ENCODE measurements at regions of chr6 and their contacts with region 1.

Region 1: DNA sequence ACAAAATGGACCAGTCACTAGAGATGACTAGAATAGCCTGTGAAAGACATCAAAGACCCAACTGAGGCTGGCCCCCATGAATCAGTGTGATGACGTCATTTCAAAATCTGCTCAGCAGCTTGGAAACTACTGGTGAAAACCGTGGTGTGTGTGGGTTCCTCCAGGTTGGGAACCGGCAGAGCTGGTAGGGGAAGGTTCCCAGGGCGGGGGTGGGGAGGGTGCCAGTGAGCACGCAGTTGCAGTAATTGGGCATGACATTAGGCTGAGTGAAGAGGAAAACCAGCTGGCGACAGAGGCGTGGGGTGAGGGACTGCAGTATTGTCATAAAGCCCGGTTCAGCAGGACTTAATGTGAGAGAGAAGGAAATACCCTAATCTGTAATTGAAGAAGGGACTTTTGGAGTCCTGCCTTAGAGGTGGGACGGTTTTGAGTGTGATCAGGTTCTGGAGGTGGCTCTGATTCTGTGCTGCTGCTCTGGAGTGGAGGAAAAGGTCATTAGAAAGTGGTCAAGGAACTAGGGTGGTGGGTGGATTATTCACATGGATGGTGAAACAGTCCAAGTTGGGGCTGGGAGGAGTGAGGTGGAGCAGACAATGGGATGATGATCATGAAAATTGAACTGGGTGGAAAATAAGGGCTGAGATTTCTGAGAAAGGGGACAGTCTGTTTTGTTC is 52.0 kb upstream of the MTHFD1L start:
- DNase-seq: no peak
- H3K4me3 ChIP-seq: no peak overlapping the region
- CTCF ChIP-seq: no peak

Region 2: GRCh38 chr6:150409576-150410066 is 403.8 kb before region 1 on chr6:
- CTCF ChIA-PET with region 1: interaction called, 15 read pairs
- POLR2A ChIA-PET with region 1: no interaction called
- DNase-seq: no peak
- H3K4me3 ChIP-seq: no peak overlapping the region
- CTCF ChIP-seq: no peak

Region 3: DNA sequence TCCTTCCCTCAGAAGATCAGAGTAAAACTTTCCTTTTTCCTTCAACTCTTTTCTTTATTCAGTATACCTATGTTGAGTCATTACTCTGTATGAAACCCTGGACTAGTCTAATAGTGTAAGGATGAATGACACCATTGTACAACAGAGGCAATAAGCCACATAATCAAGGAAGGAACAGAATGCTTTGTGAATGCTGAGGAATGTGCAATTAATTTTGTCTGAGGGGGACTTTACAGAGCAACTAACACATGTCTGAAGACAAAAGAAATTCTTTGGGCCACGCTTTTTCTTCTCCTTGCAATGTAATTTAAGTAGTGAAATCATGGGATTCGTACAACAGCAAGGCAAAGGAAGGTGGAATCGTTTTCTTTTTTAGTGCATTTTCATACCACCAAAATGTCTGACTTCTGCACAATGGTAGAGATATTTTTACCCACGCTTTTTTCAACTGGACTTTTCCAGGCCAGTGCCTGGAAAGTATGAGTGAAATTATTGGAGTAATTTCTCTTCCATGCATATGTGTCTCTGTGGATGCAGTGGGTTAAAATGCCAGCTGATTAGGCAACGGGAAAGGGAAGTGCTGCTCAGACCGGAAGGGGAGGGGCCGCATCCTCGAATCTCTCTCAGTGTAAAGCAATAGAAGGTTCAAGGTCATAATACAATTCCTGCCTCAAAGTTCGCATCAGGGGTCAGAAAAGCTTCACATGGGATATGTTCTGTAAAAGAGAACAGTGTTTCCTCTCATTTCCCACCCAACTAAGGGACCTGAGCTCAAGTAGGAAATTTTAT is 37.8 kb before region 1 on chr6:
- CTCF ChIA-PET with region 1: no interaction called
- POLR2A ChIA-PET with region 1: no interaction called
- DNase-seq: no peak
- H3K4me3 ChIP-seq: no peak overlapping the region
- CTCF ChIP-seq: no peak

Region 4: DNA sequence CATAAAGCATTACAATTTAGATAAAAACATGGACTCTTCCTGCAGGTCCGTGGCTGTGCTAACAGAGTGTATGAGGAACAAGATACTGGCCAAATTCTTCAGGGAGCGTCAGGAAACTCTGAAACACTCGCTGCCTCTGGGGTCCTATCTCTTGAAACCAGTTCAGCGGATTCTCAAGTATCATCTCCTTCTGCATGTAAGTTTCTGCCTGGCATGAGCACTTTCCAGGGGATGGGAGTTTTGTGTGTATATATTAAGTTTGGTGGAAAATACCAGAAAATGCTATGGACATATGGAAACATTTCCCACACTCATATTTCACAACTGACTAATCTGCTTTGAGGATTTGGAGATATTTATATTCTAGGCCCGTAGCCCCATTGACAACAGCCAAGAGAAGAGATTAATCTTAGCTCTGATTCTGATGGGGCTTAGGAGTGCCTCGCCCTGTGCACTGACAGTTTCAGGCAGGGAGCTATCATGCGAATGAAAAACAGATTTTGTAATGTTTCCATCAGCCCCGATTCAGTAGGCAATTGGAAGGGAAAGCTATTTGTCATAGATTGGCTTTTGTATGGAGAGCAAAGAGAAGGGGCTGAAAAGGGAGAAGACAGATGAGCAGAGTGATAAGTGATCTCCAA is 12.7 kb before region 1 on chr6:
- CTCF ChIA-PET with region 1: interaction called, 34 read pairs
- POLR2A ChIA-PET with region 1: no interaction called
- DNase-seq: no peak
- H3K4me3 ChIP-seq: no peak overlapping the region
- CTCF ChIP-seq: no peak

Region 5: DNA sequence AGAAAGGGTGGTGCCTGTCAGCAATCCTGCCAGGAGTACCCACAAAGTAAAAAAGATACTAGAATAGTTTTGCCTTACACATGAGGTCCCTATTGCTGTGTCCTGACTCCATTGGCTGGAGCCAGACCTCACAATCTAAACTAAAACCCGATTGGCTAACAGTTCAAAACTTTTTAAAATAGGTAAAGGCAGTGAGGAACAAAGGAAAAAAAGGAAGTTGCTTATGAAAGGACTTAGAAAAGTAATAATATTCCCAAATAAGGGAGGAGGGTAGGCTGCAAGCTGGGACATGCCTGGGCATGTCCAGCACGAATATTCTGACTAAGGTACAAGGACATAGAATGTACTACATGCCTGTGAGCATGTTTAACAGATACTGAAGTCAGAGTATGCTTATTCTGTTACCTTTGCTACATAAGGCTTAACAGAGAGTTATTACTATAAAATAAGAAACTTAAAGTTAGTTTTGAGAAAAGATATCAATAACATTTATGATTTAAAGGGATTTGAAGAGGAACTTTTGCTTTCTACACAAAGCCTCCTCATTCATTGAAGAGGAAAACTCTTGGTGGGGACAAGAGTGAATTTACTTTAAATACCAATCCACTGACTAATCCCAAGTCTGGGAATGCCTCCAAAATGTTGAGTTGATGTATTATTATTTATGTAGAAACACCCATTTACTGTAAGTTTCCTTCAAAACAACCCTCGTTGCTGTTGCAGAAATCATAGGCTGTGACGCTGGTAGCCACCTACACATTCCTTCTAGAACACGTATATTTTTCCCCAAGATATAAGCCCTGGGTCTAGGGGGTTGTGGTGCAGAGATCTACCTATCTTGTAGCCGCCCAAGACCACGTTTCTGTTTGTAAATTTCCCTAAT is 43.8 kb after region 1 on chr6:
- CTCF ChIA-PET with region 1: interaction called, 21 read pairs
- POLR2A ChIA-PET with region 1: no interaction called
- DNase-seq: peak; percentile 98
- H3K4me3 ChIP-seq: no peak overlapping the region; the same call in 1 of the 2 replicates
- CTCF ChIP-seq: no peak

Region 6: DNA sequence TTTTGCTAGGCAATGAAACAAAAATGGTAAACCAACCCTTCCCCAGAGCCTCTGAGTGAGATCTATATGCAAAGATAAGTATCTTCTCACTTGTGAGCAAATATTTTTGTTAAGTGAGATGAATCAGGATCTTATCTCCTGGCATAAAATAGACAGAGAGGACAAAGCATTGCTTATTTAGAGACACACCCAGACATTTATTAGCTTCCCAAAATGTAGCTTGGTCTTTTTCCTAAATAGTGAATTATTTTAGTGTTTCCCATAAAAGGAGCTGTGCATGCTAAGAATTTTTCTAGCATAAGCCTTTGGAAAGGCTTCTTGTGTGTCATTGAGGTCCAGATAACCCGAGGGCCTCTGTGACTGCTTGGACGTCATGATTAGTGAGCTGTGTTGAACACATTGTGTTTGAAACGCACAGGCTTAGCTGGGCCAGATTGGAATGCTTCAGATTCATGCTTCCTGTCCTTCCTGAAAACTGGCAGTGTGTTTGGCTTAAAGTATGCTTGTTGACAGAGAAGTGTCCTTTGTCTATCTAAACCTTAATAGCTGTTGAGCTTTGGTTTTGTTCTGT is 68.5 kb after region 1 on chr6:
- CTCF ChIA-PET with region 1: interaction called, 25 read pairs
- POLR2A ChIA-PET with region 1: no interaction called
- DNase-seq: peak; percentile 96
- H3K4me3 ChIP-seq: no peak overlapping the region
- CTCF ChIP-seq: no peak

Region 7: GRCh38 chr6:151054311-151054710 is 240.9 kb after region 1 on chr6:
- CTCF ChIA-PET with region 1: no interaction called
- POLR2A ChIA-PET with region 1: no interaction called
- DNase-seq: no peak
- H3K4me3 ChIP-seq: no peak overlapping the region
- CTCF ChIP-seq: no peak

Region 8: GRCh38 chr6:151330134-151330696 is 516.8 kb after region 1 on chr6:
- CTCF ChIA-PET with region 1: interaction called, 49 read pairs
- POLR2A ChIA-PET with region 1: no interaction called
- DNase-seq: peak; percentile 69
- H3K4me3 ChIP-seq: no peak overlapping the region
- CTCF ChIP-seq: no peak